Cardiac septum (tissue), 1 donor: ENCODE measurements at regions of chr2 and their contacts with region 1.

Region 1: DNA sequence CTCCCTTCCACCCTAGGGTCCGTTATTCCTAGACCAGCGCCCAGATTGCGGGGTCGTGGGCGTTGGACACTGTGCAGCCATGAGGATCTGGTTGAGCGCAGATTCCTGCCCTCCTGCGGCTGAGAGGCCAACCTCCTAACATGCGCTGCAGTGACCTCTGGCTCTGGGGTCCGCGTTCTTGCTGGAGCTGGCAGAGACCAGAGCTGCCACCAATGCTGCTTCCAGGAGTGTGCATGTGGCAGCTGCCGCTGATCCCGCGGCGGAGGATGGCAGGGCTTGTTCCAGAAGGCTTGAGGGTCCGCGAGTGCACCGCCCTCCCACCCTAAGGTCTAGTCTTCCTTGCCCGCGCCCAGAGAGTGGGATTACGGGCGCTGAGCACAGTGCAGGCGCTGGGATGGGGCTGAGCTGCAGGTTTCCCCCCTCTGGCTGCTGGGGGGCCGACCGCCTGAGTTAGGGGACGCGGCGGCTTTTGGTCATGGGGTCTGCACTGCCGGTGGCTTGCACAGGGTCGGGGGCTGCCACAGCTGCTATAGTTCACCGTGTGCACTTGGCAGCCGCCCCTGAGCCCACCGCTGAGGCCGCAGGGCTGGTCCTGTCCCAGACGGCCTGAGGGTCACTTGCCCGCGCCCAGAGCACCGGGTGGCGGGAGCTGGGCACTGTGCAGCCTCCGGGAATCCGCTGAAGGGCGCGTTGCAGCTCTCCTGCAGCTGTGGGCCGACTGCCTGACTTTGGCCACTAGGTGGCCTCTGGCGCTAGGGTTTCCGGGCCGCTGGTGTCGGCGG is 145.9 kb downstream of the CCDC74A start:
- DNase-seq: peak; percentile 85

Region 2: GRCh38 chr2:131413148-131413747 is 260.3 kb before region 1 on chr2:
- intact Hi-C with region 1: loop called (anchors 2 kb)
- DNase-seq: no peak

Region 3: GRCh38 chr2:131492418-131493198 is 181.0 kb before region 1 on chr2:
- intact Hi-C with region 1: loop called (anchors 10 kb)
- DNase-seq: peak; percentile 96

Region 4: DNA sequence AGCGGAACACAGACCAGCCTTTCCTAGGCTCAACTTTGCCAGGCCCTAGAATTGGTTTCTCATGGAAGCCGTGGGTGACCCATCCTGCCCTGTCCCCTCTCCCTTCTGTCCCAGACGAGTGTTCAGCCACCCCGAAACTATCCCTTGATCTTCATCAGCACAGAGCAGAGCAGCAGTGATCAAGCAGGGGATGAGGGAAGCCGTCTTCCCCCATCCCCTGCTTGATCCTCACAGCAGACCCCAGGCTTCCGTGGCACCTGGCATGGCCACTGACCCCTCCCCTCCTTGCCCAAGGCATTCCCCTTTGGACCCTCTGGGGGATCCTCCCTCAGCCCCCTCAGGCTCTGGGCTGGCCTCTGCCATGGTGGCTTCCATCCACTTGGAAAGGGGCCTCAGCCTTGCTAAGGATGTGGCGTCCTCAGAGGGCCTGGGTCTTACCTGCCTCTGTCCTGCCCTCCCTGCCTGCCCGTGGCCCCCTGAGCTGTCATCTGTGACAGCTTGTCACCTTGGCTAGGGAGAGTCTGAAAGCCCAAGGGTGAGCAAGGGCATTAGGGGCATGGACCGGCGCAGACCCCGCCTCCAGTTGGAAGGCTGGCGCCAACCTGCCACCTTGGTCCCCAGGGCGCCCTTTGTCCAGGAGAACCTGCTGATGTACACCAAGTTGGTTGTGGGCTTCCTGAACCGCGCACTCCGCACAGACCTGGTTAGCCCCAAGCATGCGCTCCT is 156.3 kb before region 1 on chr2:
- intact Hi-C with region 1: no loop called
- DNase-seq: no peak

Region 5: GRCh38 chr2:131801210-131801744 is 127.7 kb after region 1 on chr2:
- intact Hi-C with region 1: loop called (anchors 5 kb)
- DNase-seq: no peak